HepG2 (cell line): ENCODE measurements at regions of chr19 and their contacts with region 1.

Region 1: DNA sequence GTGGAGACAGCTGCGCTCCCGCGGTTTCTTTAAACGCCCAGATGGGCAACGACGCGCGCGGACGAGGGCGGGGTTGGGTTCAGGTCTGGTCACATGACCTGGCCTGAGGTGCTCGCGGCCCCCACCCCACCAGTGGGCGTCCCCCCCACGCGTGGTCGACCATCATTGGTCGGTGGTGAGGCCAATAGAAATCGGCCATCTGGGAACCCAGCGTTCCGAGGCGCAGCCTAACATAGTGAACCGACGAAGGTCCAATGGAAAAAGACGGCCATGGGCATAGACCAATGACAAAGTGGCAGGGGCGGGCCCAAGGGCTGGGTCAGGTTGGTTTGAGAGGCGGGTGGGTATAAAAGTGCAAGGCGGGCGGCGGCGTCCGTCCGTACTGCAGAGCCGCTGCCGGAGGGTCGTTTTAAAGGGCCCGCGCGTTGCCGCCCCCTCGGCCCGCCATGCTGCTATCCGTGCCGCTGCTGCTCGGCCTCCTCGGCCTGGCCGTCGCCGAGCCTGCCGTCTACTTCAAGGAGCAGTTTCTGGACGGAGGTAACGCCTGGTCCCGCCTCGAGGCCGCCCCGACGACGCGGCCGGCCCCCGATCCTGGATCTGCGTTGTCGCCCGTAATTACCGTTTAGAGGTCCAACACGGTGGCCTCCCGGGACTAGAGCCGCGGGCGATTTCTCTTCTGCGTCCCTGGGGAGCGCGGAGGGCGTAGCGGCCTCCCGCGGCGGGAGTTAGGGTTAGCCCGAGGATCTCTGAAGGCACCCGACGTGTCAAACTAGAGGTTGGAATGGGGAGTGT is at the start of gene CALR:
- DNase-seq: peak; percentile 98
- ATAC-seq: peak; percentile 91
- H3K4me3 ChIP-seq: peak within 1 kb of the TSS; percentile 84 to 97 (median 88)
- H3K27ac ChIP-seq: peak within 1 kb of the TSS; percentile 79
- H3K4me1 ChIP-seq: peaks cover 51% of the 10 kb centered on the region
- H3K27me3 ChIP-seq: peaks cover 0 to 5% of the 10 kb centered on the region in 2 experiments; a peak in 1 of 5 replicates
- CTCF ChIP-seq: no peak
- EP300 ChIP-seq: no peak; a peak in 1 of 4 replicates
- POLR2A ChIP-seq: peak; percentile 98 to 99
- RAD21 ChIP-seq: peak; percentile 11; the same call in 1 of the 2 replicates
- total RNA-seq, gene CALR: 420 and 898 TPM in 2 replicates

Region 2: GRCh38 chr19:12913011-12913561 is 25.3 kb before region 1 on chr19:
- CTCF ChIA-PET with region 1: no interaction called
- POLR2A ChIA-PET with region 1: interaction called, 40 read pairs
- in situ Hi-C with region 1: no loop called
- intact Hi-C with region 1: no loop called
- DNase-seq: peak; percentile 62
- ATAC-seq: peak; percentile 86
- H3K4me3 ChIP-seq: peak overlapping the region; percentile 48 to 63 (median 55)
- H3K27ac ChIP-seq: peak overlapping the region; percentile 65
- H3K4me1 ChIP-seq: peaks cover 30% of the 10 kb centered on the region
- H3K27me3 ChIP-seq: no peaks in the 10 kb centered on the region
- CTCF ChIP-seq: no peak
- EP300 ChIP-seq: no peak
- POLR2A ChIP-seq: 0 out of 4 replicates have a peak, but pooled peaks have one; percentile 12 to 13
- RAD21 ChIP-seq: no peak

Region 3: DNA sequence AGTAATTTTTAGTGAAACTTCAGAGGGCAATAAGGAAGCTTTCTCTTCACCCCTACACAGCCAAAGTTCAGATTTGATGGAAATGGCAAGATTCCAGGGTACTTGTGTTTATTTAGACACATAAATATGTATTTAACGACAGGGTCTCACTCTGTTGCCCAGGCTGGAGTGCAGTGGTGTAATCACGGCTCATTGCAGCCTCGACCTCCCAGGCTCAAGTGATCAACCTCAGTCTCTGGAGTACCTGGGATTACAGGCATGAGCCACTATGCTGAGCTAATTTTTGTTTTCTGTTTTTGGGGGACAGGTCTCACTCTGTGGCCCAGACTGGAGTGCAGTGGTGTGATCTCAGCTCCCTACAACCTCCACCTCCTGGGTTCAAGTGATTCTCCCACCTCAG is 17.4 kb before region 1 on chr19:
- CTCF ChIA-PET with region 1: no interaction called
- POLR2A ChIA-PET with region 1: interaction called, 40 read pairs
- in situ Hi-C with region 1: no loop called
- intact Hi-C with region 1: no loop called
- DNase-seq: no peak
- ATAC-seq: no peak
- H3K4me3 ChIP-seq: no peak overlapping the region
- H3K27ac ChIP-seq: no peak overlapping the region
- H3K4me1 ChIP-seq: no peaks in the 10 kb centered on the region
- H3K27me3 ChIP-seq: no peaks in the 10 kb centered on the region; a peak in 1 of 5 replicates
- CTCF ChIP-seq: no peak
- EP300 ChIP-seq: no peak
- POLR2A ChIP-seq: no peak
- RAD21 ChIP-seq: no peak